ENCODE measurements at regions of chrX and their contacts with region 1.

Region 1: DNA sequence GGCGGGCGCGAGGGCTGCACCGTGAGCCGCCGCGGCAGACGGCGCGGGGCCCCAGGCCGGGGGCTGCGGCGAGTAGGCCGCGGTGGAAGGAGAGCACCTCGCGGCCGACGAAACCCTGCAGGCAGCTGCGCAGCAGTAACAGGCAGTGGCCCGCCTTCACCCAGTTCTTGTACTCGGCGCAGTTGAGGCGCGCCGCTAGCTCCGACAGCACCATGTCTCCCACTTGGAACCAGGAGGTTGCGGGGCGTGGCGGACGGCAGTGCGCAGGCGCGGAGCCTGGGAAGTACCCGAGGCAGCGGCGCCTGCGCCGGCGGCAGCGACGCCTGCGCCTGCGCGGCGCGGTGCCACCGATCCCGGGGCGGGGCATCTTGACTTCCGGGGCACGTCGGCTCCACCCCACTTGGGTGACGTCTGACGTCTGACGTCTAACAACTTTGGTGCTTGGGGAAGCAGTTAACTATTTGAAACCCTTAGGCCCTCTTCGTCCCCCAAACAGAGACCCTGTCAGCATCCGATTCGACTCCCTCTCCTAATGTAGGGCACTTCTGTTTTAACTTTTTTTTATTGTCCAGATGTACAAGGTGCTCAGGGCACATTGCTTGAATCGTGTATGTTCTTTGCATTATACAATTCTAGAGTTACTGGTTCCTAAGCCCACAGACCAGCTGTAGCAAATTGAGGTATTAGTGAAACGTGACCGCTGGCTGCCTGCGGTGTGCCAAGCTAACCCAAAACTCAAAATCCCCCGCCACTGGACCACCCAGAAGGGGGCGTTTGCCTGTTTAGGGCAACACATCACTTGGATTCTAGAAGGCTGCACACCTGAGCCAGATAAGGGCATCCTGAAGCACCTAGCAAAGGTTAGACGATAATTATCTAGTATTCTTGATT is at the start of gene CXorf38:
- DNase-seq: peak; percentile 85 to 91 (median 88)
- H3K4me3 ChIP-seq: peak within 1 kb of the TSS; percentile 88 to 98 (median 90)
- H3K4me3 Mint-ChIP-seq: peak within 1 kb of the TSS; percentile 94
- H3K27ac ChIP-seq: peak within 1 kb of the TSS; percentile 75 to 87
- H3K27ac Mint-ChIP-seq: peak within 1 kb of the TSS; percentile 80 to 96 (median 94)
- H3K4me1 ChIP-seq: peaks cover 24 to 51% of the 10 kb centered on the region in 2 donors
- H3K4me1 Mint-ChIP-seq: peaks cover 28% of the 10 kb centered on the region
- H3K27me3 ChIP-seq: peaks cover 0 to 5% of the 10 kb centered on the region in 2 donors
- H3K27me3 Mint-ChIP-seq: peaks cover 0 to 19% (median 0%) of the 10 kb centered on the region in 3 donors
- CTCF ChIP-seq: no peak
- polyA plus RNA-seq, gene CXorf38: 35.1 to 51.2 (median 39.5) TPM

Region 2: DNA sequence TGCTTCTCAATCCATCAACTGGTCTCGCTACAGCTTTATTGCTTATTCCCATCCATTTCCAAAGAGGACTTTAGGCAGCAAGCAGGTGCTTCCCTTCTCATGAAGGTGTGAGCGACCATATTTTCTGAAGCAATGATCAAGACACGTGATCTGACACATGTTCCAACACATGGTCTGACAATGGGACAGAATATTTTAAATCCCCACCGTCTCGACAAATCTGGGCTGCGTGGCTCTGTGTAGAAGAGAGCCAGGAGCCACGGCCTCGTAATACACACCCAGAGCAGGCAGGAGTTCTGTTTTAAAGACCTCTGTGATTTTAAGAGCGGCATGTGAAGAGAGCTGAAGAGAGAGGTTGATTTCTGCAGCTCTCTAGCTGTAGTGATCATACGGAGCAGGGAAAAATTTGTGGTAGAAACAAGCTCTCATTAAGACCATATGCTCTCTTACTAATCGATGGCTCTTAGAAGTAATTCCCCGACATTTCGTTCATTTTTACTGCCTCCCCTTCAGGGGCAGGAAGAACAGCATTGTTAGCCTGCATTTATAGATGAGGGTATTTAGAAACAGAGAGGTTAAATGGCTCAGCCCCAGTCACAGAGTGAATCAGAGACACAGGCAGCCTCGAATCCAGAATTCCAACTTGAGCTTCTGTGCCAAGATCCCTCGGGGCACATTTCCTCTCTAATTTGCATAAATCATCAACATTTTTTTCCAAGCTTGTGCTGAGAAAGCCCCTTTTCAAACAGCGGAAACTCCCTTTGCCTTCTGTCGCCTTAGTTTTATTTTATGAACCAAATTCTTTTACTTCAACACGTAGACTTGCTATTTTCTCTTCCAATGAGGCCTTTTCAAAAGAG is 458.7 kb before region 1 on chrX:
- intact Hi-C with region 1: no loop called
- DNase-seq: no peak
- H3K4me3 ChIP-seq: no peak overlapping the region
- H3K4me3 Mint-ChIP-seq: no peak overlapping the region
- H3K27ac ChIP-seq: no peak overlapping the region
- H3K27ac Mint-ChIP-seq: no peak overlapping the region
- H3K4me1 ChIP-seq: no peaks in the 10 kb centered on the region
- H3K4me1 Mint-ChIP-seq: no peaks in the 10 kb centered on the region
- H3K27me3 ChIP-seq: no peaks in the 10 kb centered on the region
- H3K27me3 Mint-ChIP-seq: peaks cover 0 to 3% (median 1%) of the 10 kb centered on the region in 3 donors
- CTCF ChIP-seq: no peak

Region 3: DNA sequence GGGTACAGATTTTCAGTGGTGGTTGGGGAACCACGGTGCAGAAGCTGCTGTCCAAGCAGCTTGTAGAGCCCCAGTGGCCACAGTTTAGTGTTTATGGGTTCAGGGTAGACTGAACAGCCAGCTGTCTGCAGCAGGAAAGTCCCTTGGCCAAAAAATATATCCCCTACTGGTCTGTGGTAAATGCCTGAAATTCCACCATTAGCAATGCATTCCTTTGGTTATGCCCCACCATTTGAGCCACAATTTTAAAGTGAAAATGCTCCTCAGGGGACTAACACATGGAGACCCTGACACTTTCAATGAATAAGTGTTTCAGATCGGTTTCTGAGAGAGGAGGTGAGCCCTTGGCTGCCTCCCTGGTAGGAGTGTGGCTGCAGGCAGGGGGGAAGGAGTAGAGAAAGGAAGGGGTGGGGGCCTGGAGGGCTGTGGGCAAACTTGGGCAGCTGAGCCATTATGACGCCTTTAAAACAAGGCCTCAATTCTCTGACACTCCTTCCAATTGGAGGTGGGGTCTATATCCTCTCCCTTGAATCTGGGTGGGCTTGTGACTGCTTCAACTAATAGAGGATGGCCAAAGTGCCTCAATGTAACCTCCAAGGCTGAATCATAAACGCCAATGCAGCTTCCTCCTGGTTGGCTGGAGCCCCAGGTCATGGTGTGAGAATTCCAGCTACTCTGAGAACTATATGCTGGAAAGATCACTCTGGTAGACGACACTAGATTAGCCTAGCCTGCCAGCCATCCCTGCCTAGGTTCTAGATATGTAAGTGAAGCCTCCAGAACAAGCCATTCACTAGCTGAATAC is 142.5 kb before region 1 on chrX:
- intact Hi-C with region 1: no loop called
- DNase-seq: no peak
- H3K4me3 ChIP-seq: no peak overlapping the region
- H3K4me3 Mint-ChIP-seq: no peak overlapping the region
- H3K27ac ChIP-seq: no peak overlapping the region
- H3K27ac Mint-ChIP-seq: no peak overlapping the region
- H3K4me1 ChIP-seq: no peaks in the 10 kb centered on the region
- H3K4me1 Mint-ChIP-seq: no peaks in the 10 kb centered on the region
- H3K27me3 ChIP-seq: peaks cover 0 to 2% of the 10 kb centered on the region in 2 donors
- H3K27me3 Mint-ChIP-seq: peaks cover 2 to 24% (median 2%) of the 10 kb centered on the region in 3 donors
- CTCF ChIP-seq: no peak

Region 4: DNA sequence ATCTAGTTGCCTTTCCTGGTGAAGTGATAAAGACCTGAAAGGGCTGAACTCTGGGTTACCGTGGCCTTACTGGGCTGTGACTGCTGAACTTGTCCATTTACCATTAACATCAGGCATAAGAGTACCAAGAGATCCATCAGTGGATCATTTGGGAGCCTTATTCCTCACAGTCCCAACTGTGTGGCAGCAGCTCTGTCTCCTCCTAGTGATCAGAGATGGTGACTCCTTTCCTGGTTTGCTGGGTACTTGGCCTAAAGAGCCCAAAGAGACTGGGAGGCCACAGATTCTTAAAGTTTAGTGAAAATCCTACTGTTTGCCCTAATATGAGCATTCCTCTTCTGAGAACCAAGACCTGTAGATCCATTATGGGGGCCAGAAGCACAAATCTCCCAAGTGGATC is 123.1 kb before region 1 on chrX:
- intact Hi-C with region 1: no loop called
- DNase-seq: no peak
- H3K4me3 ChIP-seq: no peak overlapping the region
- H3K4me3 Mint-ChIP-seq: no peak overlapping the region
- H3K27ac ChIP-seq: no peak overlapping the region
- H3K27ac Mint-ChIP-seq: no peak overlapping the region
- H3K4me1 ChIP-seq: no peaks in the 10 kb centered on the region
- H3K4me1 Mint-ChIP-seq: no peaks in the 10 kb centered on the region
- H3K27me3 ChIP-seq: peaks cover 0 to 17% of the 10 kb centered on the region in 2 donors
- H3K27me3 Mint-ChIP-seq: peaks cover 0 to 14% (median 0%) of the 10 kb centered on the region in 3 donors
- CTCF ChIP-seq: no peak

Region 5: GRCh38 chrX:40539214-40540142 is 108.1 kb before region 1 on chrX:
- intact Hi-C with region 1: loop called in 1 of 2 experiments (anchors 10 kb)
- DNase-seq: peak; percentile 80 to 87 (median 81)
- H3K4me3 ChIP-seq: peak overlapping the region in 2 of 3 experiments; percentile 17 to 43
- H3K4me3 Mint-ChIP-seq: peak overlapping the region; percentile 74 to 81
- H3K27ac ChIP-seq: peak overlapping the region; percentile 70 to 71
- H3K27ac Mint-ChIP-seq: peak overlapping the region; percentile 88 to 95 (median 91)
- H3K4me1 ChIP-seq: peaks cover 24% of the 10 kb centered on the region in 2 donors
- H3K4me1 Mint-ChIP-seq: peaks cover 27% of the 10 kb centered on the region
- H3K27me3 ChIP-seq: peaks cover 0 to 22% of the 10 kb centered on the region in 2 donors
- H3K27me3 Mint-ChIP-seq: peaks cover under 1 to 49% (median 1%) of the 10 kb centered on the region in 3 donors
- CTCF ChIP-seq: peak; percentile 36

Region 6: DNA sequence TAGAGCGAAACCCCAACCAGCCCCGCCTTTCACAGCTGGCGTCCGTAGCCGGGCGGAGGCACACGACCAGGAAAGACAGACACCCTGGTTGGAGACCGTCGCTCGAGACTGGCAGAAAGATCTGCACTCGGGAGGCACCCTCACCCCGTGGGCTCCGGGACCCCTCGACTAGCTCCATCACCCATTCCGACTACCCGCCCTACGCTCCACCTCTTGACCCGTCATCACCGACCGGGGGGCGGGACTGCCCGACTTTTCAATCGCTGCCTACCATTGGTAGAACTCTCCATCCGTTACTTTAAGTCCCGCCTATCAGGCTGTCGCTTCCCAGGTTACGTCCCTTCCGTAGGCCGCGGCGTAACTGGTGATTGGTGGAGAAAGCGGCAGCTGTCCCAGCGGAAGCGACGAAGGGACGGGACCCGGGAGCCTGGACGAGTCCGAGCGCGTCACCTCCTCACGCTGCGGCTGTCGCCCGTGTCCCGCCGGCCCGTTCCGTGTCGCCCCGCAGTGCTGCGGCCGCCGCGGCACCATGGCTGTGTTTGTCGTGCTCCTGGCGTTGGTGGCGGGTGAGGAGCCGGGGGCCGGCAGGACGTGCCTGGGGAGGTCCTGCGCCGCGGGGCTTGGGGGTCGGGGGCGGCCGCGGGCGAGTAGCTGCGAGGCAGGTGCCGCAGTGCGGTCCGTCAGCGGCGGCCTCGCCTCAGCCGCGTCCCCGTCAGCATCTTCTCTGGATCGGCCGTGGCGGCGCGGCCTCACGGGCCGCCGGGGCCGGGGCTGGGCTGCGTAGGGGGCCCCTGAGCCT is 66.8 kb before region 1 on chrX and contains the start of gene ATP6AP2:
- intact Hi-C with region 1: loop called (anchors 5 to 10 kb)
- DNase-seq: peak; percentile 92 to 95 (median 95)
- H3K4me3 ChIP-seq: peak within 1 kb of the TSS; percentile 63 to 82 (median 71)
- H3K4me3 Mint-ChIP-seq: peak within 1 kb of the TSS; percentile 80 to 86
- H3K27ac ChIP-seq: peak within 1 kb of the TSS; percentile 92 to 94
- H3K27ac Mint-ChIP-seq: peak within 1 kb of the TSS; percentile 92 to 98 (median 96)
- H3K4me1 ChIP-seq: peaks cover 56 to 64% of the 10 kb centered on the region in 2 donors
- H3K4me1 Mint-ChIP-seq: peaks cover 53% of the 10 kb centered on the region
- H3K27me3 ChIP-seq: peaks cover 0 to 31% of the 10 kb centered on the region in 2 donors
- H3K27me3 Mint-ChIP-seq: peaks cover 0 to 48% (median 0%) of the 10 kb centered on the region in 3 donors
- CTCF ChIP-seq: no peak
- polyA plus RNA-seq, gene ATP6AP2: 332 to 497 (median 430) TPM

Region 7: GRCh38 chrX:40735325-40736169 is 88.0 kb after region 1 on chrX and contains the start of gene MED14:
- intact Hi-C with region 1: loop called (anchors 10 kb)
- DNase-seq: peak; percentile 73 to 86 (median 82)
- H3K4me3 ChIP-seq: peak within 1 kb of the TSS; percentile 65 to 85 (median 72)
- H3K4me3 Mint-ChIP-seq: peak within 1 kb of the TSS; percentile 82 to 89
- H3K27ac ChIP-seq: peak within 1 kb of the TSS; percentile 96 to 98
- H3K27ac Mint-ChIP-seq: peak within 1 kb of the TSS; percentile 98 to 99 (median 99)
- H3K4me1 ChIP-seq: peaks cover 12 to 32% of the 10 kb centered on the region in 2 donors
- H3K4me1 Mint-ChIP-seq: peaks cover 37% of the 10 kb centered on the region
- H3K27me3 ChIP-seq: peaks cover 0 to 51% of the 10 kb centered on the region in 2 donors
- H3K27me3 Mint-ChIP-seq: peaks cover 0 to 61% (median 0%) of the 10 kb centered on the region in 3 donors
- CTCF ChIP-seq: peak; percentile 45
- polyA plus RNA-seq, gene MED14: 3.6 to 20.4 (median 6.8) TPM

Region 8: DNA sequence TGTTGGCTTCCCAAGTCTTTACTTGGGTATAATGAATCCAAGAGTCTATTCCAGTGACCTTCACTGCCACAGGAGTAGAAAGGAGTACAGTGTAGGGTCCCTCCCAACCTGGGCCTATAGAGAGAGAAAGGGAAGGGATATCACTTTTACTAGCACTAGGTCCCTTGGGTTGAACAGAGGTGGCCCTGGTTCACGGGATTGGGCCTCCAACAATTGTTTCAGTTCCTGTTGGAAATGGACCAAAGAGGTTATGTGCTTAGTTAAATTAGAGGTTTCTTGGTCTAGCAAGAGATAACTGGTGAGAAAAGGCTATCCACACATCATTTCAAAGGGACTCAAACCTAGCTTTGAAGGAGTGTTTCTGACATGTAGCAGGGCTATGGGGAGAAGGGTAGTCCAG is 144.9 kb after region 1 on chrX:
- intact Hi-C with region 1: loop called in 1 of 2 experiments (anchors 10 kb)
- DNase-seq: no peak
- H3K4me3 ChIP-seq: no peak overlapping the region
- H3K4me3 Mint-ChIP-seq: no peak overlapping the region
- H3K27ac ChIP-seq: no peak overlapping the region
- H3K27ac Mint-ChIP-seq: no peak overlapping the region
- H3K4me1 ChIP-seq: peaks cover 0 to 4% of the 10 kb centered on the region in 2 donors
- H3K4me1 Mint-ChIP-seq: peaks cover 8% of the 10 kb centered on the region
- H3K27me3 ChIP-seq: peaks cover 0 to 11% of the 10 kb centered on the region in 2 donors
- H3K27me3 Mint-ChIP-seq: peaks cover 2 to 35% (median 3%) of the 10 kb centered on the region in 3 donors
- CTCF ChIP-seq: no peak

Region 9: GRCh38 chrX:41116948-41117347 is 469.4 kb after region 1 on chrX:
- intact Hi-C with region 1: no loop called
- DNase-seq: no peak
- H3K4me3 ChIP-seq: no peak overlapping the region
- H3K4me3 Mint-ChIP-seq: no peak overlapping the region
- H3K27ac ChIP-seq: no peak overlapping the region
- H3K27ac Mint-ChIP-seq: peak overlapping the region in 2 of 7 donors; percentile 22 to 34
- H3K4me1 ChIP-seq: peaks cover 0 to 10% of the 10 kb centered on the region in 2 donors
- H3K4me1 Mint-ChIP-seq: peaks cover 27% of the 10 kb centered on the region
- H3K27me3 ChIP-seq: peaks cover 0 to 2% of the 10 kb centered on the region in 2 donors
- H3K27me3 Mint-ChIP-seq: peaks cover 0 to 14% (median 0%) of the 10 kb centered on the region in 3 donors
- CTCF ChIP-seq: no peak

Measured in CD14-positive monocyte (primary cell).